Mammary epithelial cell (primary cell): ENCODE measurements at regions of chr12 and their contacts with region 1.

Region 1: DNA sequence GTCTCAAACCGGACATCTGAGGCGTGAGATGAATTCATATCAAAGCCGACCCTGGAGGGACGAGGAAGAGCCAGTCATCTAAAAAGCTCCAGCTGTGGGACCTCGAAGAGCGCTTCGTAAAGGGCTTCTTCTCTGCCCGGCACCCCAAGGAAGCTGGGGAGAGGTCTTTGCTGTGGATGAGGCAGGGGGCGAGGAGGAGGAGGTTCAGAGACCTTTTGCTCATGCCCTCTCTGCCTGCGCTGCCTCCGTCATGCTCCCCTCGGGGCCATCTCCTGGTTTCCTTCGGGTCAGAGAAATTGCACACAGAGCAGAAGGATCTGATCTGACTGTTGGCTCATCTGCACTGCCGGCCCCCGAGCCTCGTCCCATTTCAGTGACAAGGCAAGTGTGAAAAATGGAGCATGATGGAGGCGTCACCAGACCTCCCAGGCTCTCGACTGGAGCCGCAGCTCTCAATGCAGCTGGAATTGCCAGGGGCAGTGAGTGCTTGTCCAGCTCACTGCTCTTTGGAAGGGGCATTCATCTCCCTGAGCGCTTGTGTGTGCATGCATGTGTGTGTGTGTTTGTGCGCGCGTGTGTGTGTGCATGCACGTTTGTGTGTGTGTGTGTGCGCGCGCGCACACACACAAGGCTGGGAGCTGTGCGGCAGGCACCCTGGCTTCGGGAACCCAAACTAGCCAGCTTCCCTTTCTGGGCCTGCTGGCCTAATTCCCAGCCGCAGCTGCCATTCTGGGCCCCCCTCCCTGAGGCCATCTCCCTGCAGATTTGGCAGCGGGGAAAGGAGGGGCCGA is 9.2 kb downstream of the CABP1 start:
- DNase-seq: no peak
- H3K4me3 ChIP-seq: no peak overlapping the region
- H3K27ac ChIP-seq: no peak overlapping the region
- H3K4me1 ChIP-seq: peaks cover 9% of the 10 kb centered on the region
- H3K27me3 ChIP-seq: peaks cover 1% of the 10 kb centered on the region
- CTCF ChIP-seq: no peak

Region 2: DNA sequence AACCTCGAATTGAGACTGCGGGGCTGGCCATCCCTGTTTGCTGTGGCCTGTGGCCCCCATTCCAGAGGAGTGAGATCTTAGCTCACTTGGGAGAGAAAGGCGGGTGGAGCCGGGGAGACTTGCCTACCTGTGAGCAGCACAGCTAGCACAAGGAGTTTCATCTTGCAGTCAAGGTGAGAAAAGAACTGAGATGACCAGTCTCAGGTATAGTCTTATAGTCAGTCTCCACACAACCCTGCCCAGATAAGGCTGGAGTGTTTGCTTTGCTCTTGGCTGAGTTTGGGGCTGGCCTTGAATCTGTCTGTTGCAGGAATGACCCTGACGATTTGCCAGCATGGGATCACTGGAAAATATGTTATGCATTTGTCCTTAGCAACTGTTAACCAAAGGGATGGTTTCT is 322.0 kb before region 1 on chr12 and contains the start of gene PLA2G1B:
- CTCF ChIA-PET with region 1: no interaction called
- dilution Hi-C with region 1: no loop called
- in situ Hi-C with region 1: no loop called
- intact Hi-C with region 1: loop called (anchors 2 kb)
- DNase-seq: no peak
- H3K4me3 ChIP-seq: no peak within 1 kb of the TSS
- H3K27ac ChIP-seq: no peak within 1 kb of the TSS
- H3K4me1 ChIP-seq: peaks cover 4% of the 10 kb centered on the region
- H3K27me3 ChIP-seq: peaks cover 2% of the 10 kb centered on the region
- CTCF ChIP-seq: no peak
- total RNA-seq, gene PLA2G1B: not detected

Region 3: DNA sequence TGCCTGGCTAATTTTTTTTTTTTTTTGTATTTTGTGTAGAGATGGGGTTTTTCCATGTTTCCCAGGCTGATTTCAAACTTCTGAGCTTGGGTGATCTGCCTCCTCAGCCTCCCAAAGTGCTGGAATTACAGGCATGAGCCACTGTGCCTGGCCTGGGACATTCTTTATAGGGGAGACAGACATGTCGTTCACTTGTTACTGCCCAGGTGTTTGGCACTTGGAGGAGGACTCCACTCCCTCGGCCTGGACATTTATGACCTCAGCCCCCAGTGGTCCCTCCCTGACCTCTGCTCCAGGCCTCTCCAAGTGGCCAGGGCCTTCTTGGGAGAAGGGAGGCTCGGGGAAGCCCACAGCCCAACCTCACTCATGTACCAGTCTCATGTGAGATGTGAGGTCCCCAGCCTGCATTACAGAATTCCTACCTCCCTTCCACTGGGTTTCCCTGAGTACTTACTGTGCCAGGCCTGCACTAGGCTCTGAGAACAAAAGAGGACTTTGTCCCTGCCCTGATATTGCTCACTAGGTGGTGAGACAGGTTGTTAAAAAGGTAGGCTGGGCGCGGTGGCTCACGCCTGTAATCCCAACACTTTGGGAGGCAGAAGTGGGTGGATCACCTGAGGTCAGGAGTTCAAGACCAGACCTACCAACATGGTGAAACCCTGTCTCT is 58.8 kb before region 1 on chr12:
- CTCF ChIA-PET with region 1: no interaction called
- dilution Hi-C with region 1: loop called (anchors 5 kb)
- in situ Hi-C with region 1: loop called in 1 of 2 experiments (anchors 5 kb)
- intact Hi-C with region 1: no loop called
- DNase-seq: no peak
- H3K4me3 ChIP-seq: no peak overlapping the region
- H3K27ac ChIP-seq: no peak overlapping the region
- H3K4me1 ChIP-seq: no peaks in the 10 kb centered on the region
- H3K27me3 ChIP-seq: no peaks in the 10 kb centered on the region
- CTCF ChIP-seq: no peak

Region 4: DNA sequence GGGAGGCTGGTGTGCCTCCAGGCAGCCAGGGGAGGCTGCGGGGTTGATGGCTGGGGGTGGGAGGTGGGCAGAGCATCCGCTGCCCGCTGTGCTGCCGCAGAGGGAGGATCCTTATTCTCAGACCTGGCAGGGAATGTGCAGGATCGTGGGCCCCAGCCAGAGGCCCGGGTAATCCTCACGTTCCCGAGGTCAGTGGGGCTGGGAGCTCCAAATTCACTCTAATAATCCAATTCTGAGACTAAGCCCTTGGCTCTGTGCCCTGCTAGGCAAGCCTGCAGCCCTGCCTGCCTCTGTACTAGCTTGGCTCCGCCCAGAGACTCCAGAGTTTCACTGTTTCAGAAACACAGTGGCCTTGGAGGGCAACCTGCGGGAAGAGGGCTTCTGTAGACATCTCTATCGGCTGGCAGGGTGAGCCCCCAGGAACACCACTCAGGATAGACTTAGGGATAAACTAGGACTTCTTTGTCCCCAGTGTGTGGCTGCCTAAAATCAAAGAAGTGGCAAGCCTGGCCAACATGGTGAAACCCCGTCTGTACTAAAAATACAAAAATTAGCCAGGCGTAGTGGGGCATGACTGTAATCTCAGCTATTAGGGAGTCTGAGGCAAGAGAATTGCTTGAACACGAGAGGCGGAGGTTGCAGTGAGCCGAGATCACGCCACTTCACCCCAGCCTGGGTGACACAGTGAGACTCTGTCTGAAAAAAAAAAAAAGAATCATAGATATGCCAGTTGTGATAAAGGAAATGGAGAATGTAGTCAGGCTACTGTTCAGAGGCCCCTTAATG is 19.6 kb after region 1 on chr12:
- CTCF ChIA-PET with region 1: no interaction called
- dilution Hi-C with region 1: no loop called
- in situ Hi-C with region 1: no loop called
- intact Hi-C with region 1: no loop called
- DNase-seq: peak; percentile 28
- H3K4me3 ChIP-seq: no peak overlapping the region
- H3K27ac ChIP-seq: no peak overlapping the region
- H3K4me1 ChIP-seq: peaks cover 4% of the 10 kb centered on the region
- H3K27me3 ChIP-seq: no peaks in the 10 kb centered on the region
- CTCF ChIP-seq: no peak

Region 5: DNA sequence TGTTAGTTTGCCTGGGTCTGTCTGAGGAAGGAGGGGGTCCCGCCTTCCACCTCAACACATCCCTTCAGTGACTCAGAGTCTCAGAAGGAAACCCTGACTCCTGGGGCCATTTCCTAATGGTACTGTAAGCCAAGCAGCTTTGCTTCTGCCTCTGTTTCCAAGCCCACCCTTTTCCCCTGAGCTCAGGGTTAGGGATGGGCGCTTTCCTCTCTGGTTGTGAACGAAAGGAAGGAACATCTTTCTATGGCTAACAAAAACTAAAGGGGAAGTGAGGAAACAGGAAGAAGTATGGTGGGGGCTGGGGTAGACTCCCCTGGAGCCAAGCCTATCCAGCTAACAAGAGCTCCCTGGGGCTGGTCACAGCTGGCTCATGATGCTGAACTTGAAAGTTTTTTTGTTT is 49.0 kb after region 1 on chr12:
- CTCF ChIA-PET with region 1: no interaction called
- dilution Hi-C with region 1: loop called (anchors 5 kb)
- in situ Hi-C with region 1: no loop called
- intact Hi-C with region 1: no loop called
- DNase-seq: no peak
- H3K4me3 ChIP-seq: no peak overlapping the region
- H3K27ac ChIP-seq: no peak overlapping the region
- H3K4me1 ChIP-seq: no peaks in the 10 kb centered on the region
- H3K27me3 ChIP-seq: no peaks in the 10 kb centered on the region
- CTCF ChIP-seq: no peak

Region 6: DNA sequence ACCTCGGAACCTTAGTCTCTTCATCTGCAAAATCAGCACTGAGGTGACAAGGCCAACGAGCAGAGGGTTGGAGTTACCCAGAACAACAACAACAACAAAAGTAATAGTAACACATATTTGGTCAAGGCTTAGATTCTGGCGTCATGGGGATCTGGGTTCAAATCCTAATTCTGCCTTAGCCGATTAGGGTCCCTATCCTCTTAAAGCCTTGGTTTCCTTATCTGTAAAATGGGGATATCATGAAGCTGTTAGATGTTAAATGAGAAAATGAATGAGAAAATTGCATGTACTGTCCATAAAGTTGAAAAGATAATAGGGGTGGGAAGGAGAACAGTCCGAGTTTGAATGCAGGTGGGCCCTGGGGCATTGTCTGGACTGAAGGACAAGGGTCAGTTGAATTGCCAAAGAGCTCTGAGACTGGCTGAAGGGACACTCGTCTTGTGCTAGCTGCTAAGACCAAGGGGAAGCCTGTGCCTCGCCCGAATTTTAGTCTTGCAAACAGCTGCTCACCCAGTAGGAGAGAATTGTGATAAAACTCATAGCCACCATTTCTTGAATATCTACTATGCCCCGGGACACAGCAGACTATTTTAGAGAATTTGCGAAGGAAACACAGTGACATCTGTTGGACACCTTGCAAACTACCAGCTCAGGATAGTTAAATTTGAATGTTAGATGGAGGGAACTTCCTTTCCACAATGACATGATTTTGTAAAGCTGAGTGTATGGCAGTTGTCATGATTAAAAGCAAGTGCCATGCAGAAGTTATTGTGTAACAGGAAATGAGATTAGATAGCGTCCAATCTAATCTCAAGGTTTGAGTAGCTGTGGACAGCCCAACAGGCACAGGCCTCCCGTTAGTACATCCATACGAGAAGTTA is 321.9 kb after region 1 on chr12:
- CTCF ChIA-PET with region 1: interaction called, 6 read pairs
- dilution Hi-C with region 1: no loop called
- in situ Hi-C with region 1: no loop called
- intact Hi-C with region 1: loop called (anchors 1 kb)
- DNase-seq: peak; percentile 50
- H3K4me3 ChIP-seq: no peak overlapping the region
- H3K27ac ChIP-seq: no peak overlapping the region
- H3K4me1 ChIP-seq: no peaks in the 10 kb centered on the region
- H3K27me3 ChIP-seq: no peaks in the 10 kb centered on the region
- CTCF ChIP-seq: peak; percentile 80

Region 7: GRCh38 chr12:121095544-121096198 is 446.0 kb after region 1 on chr12:
- CTCF ChIA-PET with region 1: no interaction called
- dilution Hi-C with region 1: no loop called
- in situ Hi-C with region 1: no loop called
- intact Hi-C with region 1: loop called (anchors 5 kb)
- DNase-seq: no peak
- H3K4me3 ChIP-seq: peak overlapping the region in 1 of 3 experiments; percentile 0
- H3K27ac ChIP-seq: no peak overlapping the region
- H3K4me1 ChIP-seq: peaks cover 5% of the 10 kb centered on the region
- H3K27me3 ChIP-seq: no peaks in the 10 kb centered on the region
- CTCF ChIP-seq: peak; percentile 46 to 80